PC-9 (cell line): ENCODE measurements at regions of chr2 and their contacts with region 1.

Region 1: DNA sequence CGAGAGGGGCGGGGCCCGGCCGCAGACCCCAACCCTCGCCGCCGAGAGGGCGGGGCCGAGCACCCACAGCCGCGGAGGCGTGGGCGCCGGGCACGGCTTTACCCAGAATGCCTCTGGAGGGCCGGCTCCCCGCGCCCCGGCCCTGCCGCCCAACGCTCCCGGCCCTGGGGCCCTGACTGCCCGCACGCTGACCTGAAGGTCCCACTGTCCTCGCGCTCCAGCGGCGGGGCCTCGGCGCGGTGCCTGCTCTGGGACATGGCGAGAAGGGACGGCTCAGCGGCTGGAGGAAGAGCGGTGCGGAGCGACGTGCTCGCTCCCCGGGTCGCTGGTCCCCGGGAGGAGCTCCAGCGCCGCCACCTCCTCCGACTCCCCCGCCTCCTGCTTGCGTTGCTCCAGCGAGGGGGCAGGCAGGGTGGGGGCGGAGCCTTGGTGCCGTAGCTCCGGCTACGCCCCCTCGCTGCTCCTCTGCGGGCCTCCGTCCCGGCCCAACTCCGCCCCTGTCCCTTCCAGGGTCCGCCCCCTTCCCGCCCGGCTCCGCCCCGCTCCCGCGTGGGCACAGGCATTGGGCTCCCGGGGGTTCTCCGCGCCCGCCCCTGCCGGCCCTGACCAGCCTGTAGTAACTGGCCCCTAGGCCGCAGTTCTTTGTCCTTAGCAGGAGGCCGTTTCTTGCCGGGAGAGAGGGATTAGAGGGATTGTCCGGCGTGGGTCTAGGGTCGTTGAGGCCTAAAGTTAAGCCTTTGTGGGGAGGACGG is at the starts of genes PJVK and PRKRA:
- DNase-seq: peak; percentile 96 to 100
- H3K4me3 ChIP-seq: peak within 1 kb of the TSS; percentile 78
- H3K27ac ChIP-seq: peak within 1 kb of the TSS; percentile 93
- H3K4me1 ChIP-seq: peaks cover 22% of the 10 kb centered on the region
- H3K27me3 ChIP-seq: no peaks in the 10 kb centered on the region
- CTCF ChIP-seq: no peak
- total RNA-seq, gene PJVK: 14.6 and 16.9 TPM in 2 replicates
- total RNA-seq, gene PRKRA: 87.0 and 93.3 TPM in 2 replicates

Region 2: DNA sequence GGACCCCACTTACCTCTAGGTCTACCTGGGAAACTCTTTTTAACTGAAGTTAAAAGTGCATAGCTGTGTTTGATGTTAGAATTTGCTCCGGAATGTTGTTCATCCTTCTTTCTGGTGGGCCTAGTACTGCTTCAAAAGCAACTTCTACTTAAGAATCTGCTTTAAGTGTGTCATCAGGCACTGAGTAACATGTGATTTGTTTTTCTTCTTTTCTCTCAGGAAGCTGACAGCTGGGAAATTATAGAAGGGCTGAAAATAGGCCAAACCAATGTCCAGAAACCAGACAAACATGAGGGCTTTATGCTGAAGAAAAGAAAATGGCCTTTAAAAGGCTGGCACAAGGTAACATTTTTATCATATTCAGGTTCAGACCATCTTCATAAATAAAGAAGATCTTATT is 122.9 kb before region 1 on chr2:
- CTCF ChIA-PET with region 1: no interaction called
- POLR2A ChIA-PET with region 1: interaction called, 16 read pairs
- intact Hi-C with region 1: no loop called
- DNase-seq: no peak
- H3K4me3 ChIP-seq: no peak overlapping the region
- H3K27ac ChIP-seq: no peak overlapping the region
- H3K4me1 ChIP-seq: no peaks in the 10 kb centered on the region
- H3K27me3 ChIP-seq: no peaks in the 10 kb centered on the region
- CTCF ChIP-seq: no peak

Region 3: GRCh38 chr2:178491612-178492011 is 40.7 kb after region 1 on chr2:
- CTCF ChIA-PET with region 1: no interaction called
- POLR2A ChIA-PET with region 1: interaction called, 35 read pairs
- intact Hi-C with region 1: no loop called
- DNase-seq: no peak
- H3K4me3 ChIP-seq: no peak overlapping the region
- H3K27ac ChIP-seq: no peak overlapping the region
- H3K4me1 ChIP-seq: no peaks in the 10 kb centered on the region
- H3K27me3 ChIP-seq: no peaks in the 10 kb centered on the region
- CTCF ChIP-seq: no peak

Region 4: DNA sequence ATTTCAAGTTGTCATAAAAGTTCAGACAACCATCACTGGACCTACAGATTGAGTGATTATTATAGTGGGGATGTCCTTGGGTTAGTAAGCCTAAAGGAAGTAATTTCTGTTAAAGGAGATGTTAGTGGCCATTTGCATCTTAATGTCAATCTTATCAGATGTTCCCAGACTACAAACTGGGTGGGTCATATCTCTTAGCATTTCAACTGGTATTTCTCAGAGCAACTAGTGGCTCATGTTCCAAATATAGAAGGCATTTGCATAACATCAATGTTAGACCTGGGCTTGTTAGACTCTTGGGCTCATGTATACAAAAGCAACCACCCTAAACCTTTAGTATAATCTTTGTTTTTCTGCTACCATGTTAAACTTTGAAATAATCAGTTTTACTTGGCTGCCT is 47.2 kb after region 1 on chr2:
- CTCF ChIA-PET with region 1: no interaction called
- POLR2A ChIA-PET with region 1: interaction called, 10 read pairs
- intact Hi-C with region 1: no loop called
- DNase-seq: no peak
- H3K4me3 ChIP-seq: no peak overlapping the region
- H3K27ac ChIP-seq: no peak overlapping the region
- H3K4me1 ChIP-seq: no peaks in the 10 kb centered on the region
- H3K27me3 ChIP-seq: no peaks in the 10 kb centered on the region
- CTCF ChIP-seq: no peak

Region 5: GRCh38 chr2:178522950-178523595 is 72.1 kb after region 1 on chr2:
- CTCF ChIA-PET with region 1: interaction called, 4 read pairs
- POLR2A ChIA-PET with region 1: interaction called, 5 read pairs
- intact Hi-C with region 1: loop called (anchors 1 kb)
- DNase-seq: peak; percentile 85 to 92
- H3K4me3 ChIP-seq: peak overlapping the region; percentile 78
- H3K27ac ChIP-seq: peak overlapping the region; percentile 30
- H3K4me1 ChIP-seq: peaks cover 10% of the 10 kb centered on the region
- H3K27me3 ChIP-seq: no peaks in the 10 kb centered on the region
- CTCF ChIP-seq: peak; percentile 97